ENCODE measurements at regions of chr10 and their contacts with region 1.

Region 1: GRCh38 chr10:69237528-69238159 is 17.5 kb downstream of the HKDC1 start:
- DNase-seq: peak; percentile 59 to 79
- ATAC-seq: peak; percentile 97 to 99
- H3K4me3 ChIP-seq: no peak overlapping the region
- H3K27ac ChIP-seq: no peak overlapping the region
- H3K4me1 ChIP-seq: no peaks in the 10 kb centered on the region
- H3K27me3 ChIP-seq: no peaks in the 10 kb centered on the region
- CTCF ChIP-seq: peak; percentile 82 to 97 (median 96)
- POLR2A ChIP-seq: no peak

Region 2: DNA sequence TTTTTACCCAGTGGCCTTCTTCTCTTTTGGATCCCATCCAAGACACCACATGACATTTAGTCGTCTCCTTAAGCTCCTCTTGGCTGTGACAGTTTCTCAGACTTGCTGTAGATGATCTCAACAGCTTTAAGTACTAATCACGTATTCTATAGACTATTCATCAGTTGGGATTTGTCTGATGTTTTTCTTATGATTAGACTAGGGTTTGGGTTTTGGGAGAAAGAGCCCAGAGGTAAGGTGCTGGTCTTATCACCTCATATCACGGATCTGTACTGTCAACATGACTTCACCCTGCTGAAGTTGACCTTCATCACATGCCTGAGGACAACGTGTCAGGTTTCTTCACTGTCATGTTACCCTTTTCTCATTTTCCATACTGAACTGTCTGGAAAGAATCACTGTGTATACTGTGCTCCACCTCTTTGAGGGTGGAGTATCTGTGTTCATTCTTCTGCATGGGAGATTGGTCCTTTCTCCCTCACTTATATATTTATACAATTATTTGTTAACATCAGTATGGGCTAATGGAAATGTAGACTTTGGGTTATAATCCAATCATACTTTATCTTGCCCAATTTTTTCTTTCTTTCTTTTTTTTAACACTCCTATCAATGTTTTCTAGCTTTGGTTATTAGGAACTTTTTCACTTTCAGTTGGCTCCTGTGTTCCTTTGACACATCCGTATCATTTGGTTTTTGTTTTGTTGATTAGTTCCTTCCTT is 23.9 kb before region 1 on chr10:
- in situ Hi-C with region 1: no loop called
- intact Hi-C with region 1: no loop called
- DNase-seq: no peak
- ATAC-seq: peak in 1 of 2 donors; percentile 76
- H3K4me3 ChIP-seq: no peak overlapping the region
- H3K27ac ChIP-seq: no peak overlapping the region
- H3K4me1 ChIP-seq: peaks cover 0 to 5% of the 10 kb centered on the region in 2 donors
- H3K27me3 ChIP-seq: no peaks in the 10 kb centered on the region
- CTCF ChIP-seq: no peak
- POLR2A ChIP-seq: no peak

Region 3: GRCh38 chr10:69303632-69304051 is 66.0 kb after region 1 on chr10:
- in situ Hi-C with region 1: loop called in 1 of 4 experiments (anchors 10 kb)
- intact Hi-C with region 1: no loop called
- DNase-seq: no peak
- ATAC-seq: no peak
- H3K4me3 ChIP-seq: no peak overlapping the region
- H3K27ac ChIP-seq: no peak overlapping the region
- H3K4me1 ChIP-seq: no peaks in the 10 kb centered on the region
- H3K27me3 ChIP-seq: no peaks in the 10 kb centered on the region
- CTCF ChIP-seq: no peak
- POLR2A ChIP-seq: no peak

Region 4: DNA sequence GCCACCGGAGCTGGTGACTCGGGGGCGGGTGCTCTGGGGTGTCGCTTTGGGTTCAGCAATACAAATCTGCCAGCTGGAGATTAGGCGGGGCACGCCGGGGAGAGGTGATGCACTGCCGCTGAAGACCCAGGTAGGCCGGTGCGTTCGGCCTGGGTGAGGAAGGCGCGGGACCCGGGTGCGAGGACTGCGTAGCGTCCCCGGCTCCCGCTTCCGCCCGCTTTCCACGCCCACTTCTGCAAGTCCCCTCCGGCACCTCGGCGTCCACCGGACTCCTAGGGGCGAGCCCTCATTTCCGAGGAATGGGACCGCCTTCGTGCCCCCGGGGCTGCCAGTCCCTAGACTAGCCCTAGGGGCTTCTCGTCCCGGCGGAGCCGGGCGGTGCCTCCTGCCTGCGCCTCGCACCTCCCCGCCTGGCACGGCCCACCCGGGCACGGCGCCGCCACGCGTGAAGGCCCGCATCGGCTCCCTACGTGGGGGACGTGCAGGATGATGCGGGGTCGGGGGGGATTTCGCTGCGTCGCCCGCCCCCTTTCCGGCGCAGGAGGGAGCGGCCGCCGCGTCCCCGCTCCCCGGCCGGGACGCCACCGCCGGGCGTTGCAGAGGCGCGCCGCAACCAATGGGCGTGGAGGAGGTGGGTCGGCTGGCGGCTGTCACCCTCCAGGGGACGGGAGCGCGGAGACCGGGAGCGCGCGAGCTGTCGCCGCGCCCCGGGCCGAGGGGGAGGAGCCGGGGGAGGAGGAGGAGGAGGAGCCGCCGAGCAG is 80.6 kb after region 1 on chr10:
- in situ Hi-C with region 1: no loop called
- intact Hi-C with region 1: loop called (anchors 5 kb)
- DNase-seq: peak; percentile 88 to 89
- ATAC-seq: peak; percentile 81 to 84
- H3K4me3 ChIP-seq: peak overlapping the region; percentile 92 to 97 (median 96)
- H3K27ac ChIP-seq: peak overlapping the region; percentile 92 to 98 (median 96)
- H3K4me1 ChIP-seq: peaks cover 34 to 41% of the 10 kb centered on the region in 2 donors
- H3K27me3 ChIP-seq: no peaks in the 10 kb centered on the region
- CTCF ChIP-seq: peak in 1 of 5 experiments; percentile 25
- POLR2A ChIP-seq: no peak

Region 5: GRCh38 chr10:69408318-69409175 is 170.9 kb after region 1 on chr10:
- in situ Hi-C with region 1: no loop called
- intact Hi-C with region 1: loop called (anchors 5 kb)
- DNase-seq: peak; percentile 85 to 92
- ATAC-seq: peak; percentile 73 to 81
- H3K4me3 ChIP-seq: peak overlapping the region; percentile 51 to 67 (median 59)
- H3K27ac ChIP-seq: peak overlapping the region; percentile 87 to 99 (median 90)
- H3K4me1 ChIP-seq: peaks cover 17 to 31% of the 10 kb centered on the region in 2 donors
- H3K27me3 ChIP-seq: no peaks in the 10 kb centered on the region
- CTCF ChIP-seq: peak; percentile 19 to 91 (median 64)
- POLR2A ChIP-seq: peak; percentile 35 to 43

Region 6: DNA sequence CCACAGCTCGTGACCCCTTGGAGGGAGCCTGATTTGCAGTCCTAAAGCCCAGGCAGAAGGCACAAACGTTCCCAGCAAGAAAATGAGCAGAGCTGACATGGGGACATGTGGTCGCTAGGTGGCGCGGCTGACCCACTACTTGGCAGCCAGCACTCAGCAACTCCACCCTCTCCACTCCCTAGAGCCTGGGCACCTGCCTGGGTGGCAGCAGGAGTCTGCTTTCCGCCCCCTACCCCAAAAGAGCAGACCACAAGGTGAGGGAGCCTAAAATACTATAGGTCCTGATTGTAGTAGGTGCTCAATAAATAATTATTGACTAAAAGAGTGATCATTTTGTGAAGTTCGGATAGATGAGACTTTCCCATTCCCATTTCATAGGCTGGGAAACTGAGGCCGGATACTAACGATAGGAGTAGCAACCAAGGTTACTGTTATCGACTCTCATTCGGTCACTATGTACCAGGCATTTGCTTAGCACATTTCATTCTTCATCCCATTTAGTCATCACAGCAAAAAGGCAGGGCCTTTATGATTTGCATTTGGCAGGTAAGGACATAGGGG is 278.1 kb after region 1 on chr10:
- in situ Hi-C with region 1: loop called (anchors 25 kb)
- intact Hi-C with region 1: no loop called
- DNase-seq: no peak
- ATAC-seq: peak in 1 of 2 donors; percentile 58
- H3K4me3 ChIP-seq: no peak overlapping the region
- H3K27ac ChIP-seq: no peak overlapping the region
- H3K4me1 ChIP-seq: no peaks in the 10 kb centered on the region
- H3K27me3 ChIP-seq: no peaks in the 10 kb centered on the region
- CTCF ChIP-seq: peak; percentile 9 to 63 (median 48)
- POLR2A ChIP-seq: no peak

Region 7: GRCh38 chr10:69831231-69831855 is 593.7 kb after region 1 on chr10:
- in situ Hi-C with region 1: no loop called
- intact Hi-C with region 1: no loop called
- DNase-seq: no peak
- ATAC-seq: no peak
- H3K4me3 ChIP-seq: no peak overlapping the region
- H3K27ac ChIP-seq: no peak overlapping the region
- H3K4me1 ChIP-seq: no peaks in the 10 kb centered on the region
- H3K27me3 ChIP-seq: no peaks in the 10 kb centered on the region
- CTCF ChIP-seq: no peak
- POLR2A ChIP-seq: no peak

Region 8: DNA sequence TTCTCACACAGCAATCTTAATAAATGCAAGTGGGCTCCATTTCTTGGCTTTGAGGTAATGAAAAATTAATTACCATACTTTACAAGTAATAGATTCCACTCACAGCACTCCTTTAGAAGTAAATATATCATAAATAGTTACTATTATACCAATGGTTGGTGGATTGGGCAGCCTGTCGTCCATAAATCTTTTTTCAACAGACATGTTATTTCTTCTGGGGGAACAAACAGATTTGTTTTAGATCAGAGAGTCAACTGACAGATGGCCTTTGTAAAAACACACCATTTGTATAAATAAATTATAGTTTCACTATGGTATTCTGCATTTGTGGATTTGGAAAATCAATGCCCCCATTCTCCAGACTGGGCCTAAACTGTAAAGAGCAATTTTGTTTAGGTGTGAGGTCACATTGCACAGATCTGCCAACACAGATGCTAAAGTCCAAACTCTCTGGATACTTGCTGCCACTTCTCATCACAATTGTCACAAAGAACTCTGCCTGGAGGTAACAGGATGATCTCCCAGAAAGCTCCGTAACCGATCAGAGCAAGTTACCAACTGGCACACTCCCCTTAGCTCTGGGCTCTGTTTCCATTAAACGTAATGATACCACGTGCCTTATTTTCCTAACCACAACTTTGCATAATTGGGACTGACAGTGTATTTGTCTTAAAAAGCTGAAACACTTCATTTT is 810.5 kb after region 1 on chr10:
- in situ Hi-C with region 1: no loop called
- intact Hi-C with region 1: no loop called
- DNase-seq: no peak
- ATAC-seq: no peak
- H3K4me3 ChIP-seq: no peak overlapping the region
- H3K27ac ChIP-seq: no peak overlapping the region
- H3K4me1 ChIP-seq: peaks cover 0 to 6% of the 10 kb centered on the region in 2 donors
- H3K27me3 ChIP-seq: peaks cover 0 to 4% (median 0%) of the 10 kb centered on the region in 3 donors
- CTCF ChIP-seq: no peak
- POLR2A ChIP-seq: no peak